Natural killer cell (primary cell): ENCODE measurements at regions of chr19 and their contacts with region 1.

Region 1: GRCh38 chr19:47124937-47125668 is 5.5 kb upstream of the SAE1 start:
- DNase-seq: peak in 1 of 2 donors; percentile 84
- ATAC-seq: peak; percentile 68 to 78 (median 68)
- H3K4me3 ChIP-seq: no peak overlapping the region
- H3K4me3 Mint-ChIP-seq: no peak overlapping the region
- H3K27ac ChIP-seq: no peak overlapping the region
- H3K27ac Mint-ChIP-seq: no peak overlapping the region
- H3K4me1 ChIP-seq: peaks cover 2% of the 10 kb centered on the region
- H3K4me1 Mint-ChIP-seq: peaks cover under 1 to 2% of the 10 kb centered on the region in 2 donors
- H3K27me3 ChIP-seq: no peaks in the 10 kb centered on the region
- H3K27me3 Mint-ChIP-seq: no peaks in the 10 kb centered on the region
- CTCF ChIP-seq: peak; percentile 74

Region 2: GRCh38 chr19:47035127-47036096 is 89.7 kb before region 1 on chr19:
- intact Hi-C with region 1: loop called (anchors 1 kb)
- DNase-seq: peak; percentile 95 to 96
- ATAC-seq: peak; percentile 97 to 99 (median 97)
- H3K4me3 ChIP-seq: peak overlapping the region; percentile 42
- H3K4me3 Mint-ChIP-seq: peak overlapping the region; percentile 88
- H3K27ac ChIP-seq: no peak overlapping the region
- H3K27ac Mint-ChIP-seq: peak overlapping the region; percentile 70 to 73
- H3K4me1 ChIP-seq: peaks cover 22% of the 10 kb centered on the region
- H3K4me1 Mint-ChIP-seq: peaks cover 16 to 24% of the 10 kb centered on the region in 2 donors
- H3K27me3 ChIP-seq: peaks cover 4% of the 10 kb centered on the region
- H3K27me3 Mint-ChIP-seq: peaks cover 0 to 14% of the 10 kb centered on the region in 2 donors
- CTCF ChIP-seq: peak; percentile 98

Region 3: DNA sequence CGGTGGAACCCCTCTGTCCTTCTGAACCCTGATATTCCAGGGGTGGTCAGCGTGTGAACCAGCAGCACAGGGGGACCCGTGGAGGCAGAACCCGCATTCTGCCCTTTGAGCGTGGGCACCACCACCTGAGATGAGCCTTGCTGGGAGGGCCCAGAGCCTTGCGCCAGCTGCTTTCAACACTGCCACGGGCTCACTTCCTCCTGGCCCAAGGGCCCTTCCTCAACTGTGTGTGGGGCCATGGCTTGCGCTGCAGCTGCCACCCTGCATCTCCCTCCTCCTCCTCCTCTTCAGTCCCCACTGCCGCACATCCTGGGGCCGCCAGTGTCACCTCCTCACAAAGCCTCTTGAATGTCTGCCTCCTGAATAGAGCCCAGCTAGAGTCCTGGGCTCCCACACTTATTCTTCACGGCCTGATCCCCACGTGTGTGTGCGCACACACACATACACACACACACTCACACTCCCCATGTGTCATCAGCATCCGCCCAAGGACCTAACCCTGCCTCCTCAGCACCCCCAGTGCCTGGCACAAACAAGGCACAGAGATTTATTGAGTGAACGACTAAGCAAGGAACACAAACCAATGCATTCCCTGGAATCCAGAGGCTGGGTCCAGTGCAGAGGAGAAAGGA is 49.8 kb before region 1 on chr19:
- intact Hi-C with region 1: loop called (anchors 1 kb)
- DNase-seq: no peak
- ATAC-seq: peak in 1 of 3 donors; percentile 57
- H3K4me3 ChIP-seq: no peak overlapping the region
- H3K4me3 Mint-ChIP-seq: no peak overlapping the region
- H3K27ac ChIP-seq: no peak overlapping the region
- H3K27ac Mint-ChIP-seq: peak overlapping the region in 1 of 2 donors; percentile 61
- H3K4me1 ChIP-seq: peaks cover 10% of the 10 kb centered on the region
- H3K4me1 Mint-ChIP-seq: peaks cover 12 to 16% of the 10 kb centered on the region in 2 donors
- H3K27me3 ChIP-seq: no peaks in the 10 kb centered on the region
- H3K27me3 Mint-ChIP-seq: no peaks in the 10 kb centered on the region
- CTCF ChIP-seq: no peak